Sigmoid colon (tissue), 7 donors: ENCODE measurements at regions of chr5 and their contacts with region 1.

Region 1: DNA sequence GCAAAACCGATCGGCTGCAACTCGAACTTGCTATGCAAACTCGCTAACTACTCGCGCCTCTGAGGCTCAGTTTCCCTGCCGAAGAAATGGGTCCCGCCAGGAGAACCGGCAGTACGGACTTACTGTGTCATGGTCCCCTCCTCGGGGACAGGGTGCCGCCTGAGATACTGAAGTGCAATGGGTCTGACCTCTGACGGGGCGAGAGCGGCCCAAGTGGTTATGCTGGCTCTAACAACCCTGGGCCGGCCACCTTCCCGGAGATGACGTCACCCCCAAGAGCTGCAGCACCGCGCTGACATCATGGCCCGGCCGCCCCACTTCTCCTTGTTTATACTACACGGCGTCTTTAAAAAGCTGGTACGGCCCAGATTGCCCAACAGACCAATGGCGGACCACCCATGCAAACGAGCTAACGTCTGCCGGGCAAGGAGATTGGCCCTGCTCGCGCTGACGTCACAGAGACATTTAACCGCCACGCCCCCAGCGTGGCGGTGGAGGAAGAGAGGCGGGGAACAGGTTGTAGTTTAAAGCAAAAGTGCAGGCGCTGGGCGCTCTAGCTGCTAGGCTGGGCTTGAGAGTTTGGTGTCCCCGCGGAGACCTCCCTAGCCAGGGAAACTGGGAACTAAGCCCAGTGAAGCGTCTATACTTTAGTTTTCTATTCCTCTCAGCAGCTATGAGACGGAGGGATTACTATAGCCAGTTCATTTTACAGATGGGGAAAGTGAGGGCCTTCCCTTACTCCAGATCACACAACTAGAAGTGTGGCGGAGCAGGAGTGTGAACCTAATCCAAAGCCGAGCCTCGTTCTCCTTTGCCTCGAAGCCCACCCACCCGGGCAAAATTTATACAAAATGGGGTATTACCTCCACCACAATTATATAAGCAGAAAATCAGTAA is 654 bp upstream of the RNF44 start:
- DNase-seq: peak; percentile 100
- H3K4me3 ChIP-seq: peak overlapping the region; percentile 67 to 96 (median 90)
- H3K27ac ChIP-seq: peak overlapping the region; percentile 93 to 99 (median 98)
- H3K4me1 ChIP-seq: peaks cover 0 to 64% (median 52%) of the 10 kb centered on the region in 4 donors
- H3K27me3 ChIP-seq: no peaks in the 10 kb centered on the region
- CTCF ChIP-seq: no peak
- EP300 ChIP-seq: peak in 1 of 4 donors; percentile 78
- POLR2A ChIP-seq: peak in 1 of 2 donors; percentile 34

Region 2: DNA sequence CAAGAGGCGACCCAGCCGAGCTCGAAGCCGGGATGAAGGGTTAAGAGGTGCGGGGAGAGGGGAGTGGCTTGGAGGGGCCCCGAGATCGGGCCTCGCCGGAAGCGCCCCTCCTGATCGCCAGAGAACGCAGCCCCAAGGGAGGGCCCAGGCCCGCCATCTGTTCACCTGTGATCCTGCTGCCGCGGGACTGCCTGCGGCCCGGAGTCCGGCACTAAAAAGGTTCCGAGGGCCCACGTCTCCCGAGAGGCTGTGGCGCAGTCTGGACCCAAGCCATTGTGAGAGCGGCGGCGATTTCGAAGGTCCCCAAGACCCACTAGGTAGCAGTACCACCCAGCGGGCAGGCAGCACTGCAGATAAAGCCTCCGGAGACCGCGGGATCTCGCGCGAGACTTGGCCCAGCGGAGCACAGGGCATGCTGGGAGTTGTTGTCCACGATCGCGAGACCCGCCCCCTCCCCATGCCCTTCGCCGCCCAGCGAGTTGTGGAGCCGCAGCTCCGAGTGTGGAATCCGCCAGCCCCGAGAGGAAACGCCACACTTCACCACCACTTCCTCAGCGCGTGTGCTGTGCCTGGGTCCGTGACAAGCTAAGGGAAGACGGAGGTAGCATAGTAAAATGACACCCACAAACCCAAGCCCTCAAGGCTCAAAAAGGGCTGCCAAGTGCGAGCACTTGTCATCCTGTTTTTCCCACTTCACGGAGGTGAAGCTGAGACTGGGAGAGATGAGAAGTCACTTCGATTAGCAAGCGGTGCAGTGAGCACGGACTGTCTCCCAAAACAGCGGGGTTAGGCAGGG is 176.2 kb before region 1 on chr5 and contains the start of gene KIAA1191:
- intact Hi-C with region 1: loop called (anchors 5 kb)
- DNase-seq: peak; percentile 96
- H3K4me3 ChIP-seq: peak within 1 kb of the TSS; percentile 72 to 99 (median 80)
- H3K27ac ChIP-seq: peak within 1 kb of the TSS; percentile 72 to 87 (median 84)
- H3K4me1 ChIP-seq: peaks cover 0 to 36% (median 29%) of the 10 kb centered on the region in 4 donors
- H3K27me3 ChIP-seq: no peaks in the 10 kb centered on the region
- CTCF ChIP-seq: peak in 2 of 4 experiments; percentile 3 to 9
- EP300 ChIP-seq: no peak
- POLR2A ChIP-seq: peak; percentile 55 to 85
- total RNA-seq, gene KIAA1191: 88.8 to 117 (median 108) TPM

Region 3: GRCh38 chr5:176388444-176389134 is 149.3 kb before region 1 on chr5 and contains the starts of genes HIGD2A and NOP16:
- intact Hi-C with region 1: loop called (anchors 10 kb)
- DNase-seq: peak; percentile 100
- H3K4me3 ChIP-seq: peak within 1 kb of the TSS; percentile 57 to 65 (median 61)
- H3K27ac ChIP-seq: peak within 1 kb of the TSS; percentile 88 to 94 (median 93)
- H3K4me1 ChIP-seq: peaks cover 0 to 30% (median 25%) of the 10 kb centered on the region in 4 donors
- H3K27me3 ChIP-seq: no peaks in the 10 kb centered on the region
- CTCF ChIP-seq: peak in 1 of 4 experiments; percentile 36
- EP300 ChIP-seq: no peak
- POLR2A ChIP-seq: no peak
- total RNA-seq, gene HIGD2A: 201 to 249 (median 235) TPM
- total RNA-seq, gene NOP16: 4.4 to 17.8 (median 9.6) TPM

Region 4: DNA sequence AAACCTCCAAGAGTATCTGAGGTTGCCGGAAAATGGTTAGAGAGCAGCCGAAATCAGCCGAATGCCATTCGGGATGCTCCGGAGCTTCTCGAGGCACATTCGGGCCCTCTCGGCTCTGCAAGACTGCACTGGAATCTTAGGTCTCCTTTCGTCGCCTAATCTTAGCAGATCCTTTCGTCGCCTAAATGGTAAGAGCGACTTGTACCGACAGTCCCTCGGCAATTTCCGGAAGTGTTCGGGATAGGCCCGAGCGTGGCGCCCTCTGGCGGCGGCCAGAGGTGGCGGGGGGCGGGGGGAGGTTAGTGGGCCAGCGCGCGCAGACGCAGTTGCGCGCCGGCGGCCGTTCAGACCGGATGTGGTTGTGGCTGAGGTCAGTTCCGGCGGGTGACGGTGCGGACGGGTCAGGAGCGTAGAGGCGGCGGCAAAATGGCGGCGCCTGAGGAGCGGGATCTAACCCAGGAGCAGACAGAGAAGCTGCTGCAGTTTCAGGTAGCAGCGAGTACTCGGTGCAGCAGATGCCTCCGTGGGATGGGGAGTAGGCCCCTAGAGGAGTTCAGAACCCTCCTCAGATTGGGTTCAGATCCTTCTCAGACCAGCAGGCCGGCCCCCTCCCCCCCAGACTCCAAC is 89.8 kb before region 1 on chr5 and contains the start of gene FAF2:
- intact Hi-C with region 1: loop called (anchors 2 kb)
- DNase-seq: peak; percentile 98
- H3K4me3 ChIP-seq: peak within 1 kb of the TSS; percentile 65 to 99 (median 94)
- H3K27ac ChIP-seq: peak within 1 kb of the TSS; percentile 94 to 98 (median 96)
- H3K4me1 ChIP-seq: peaks cover 0 to 27% (median 25%) of the 10 kb centered on the region in 4 donors
- H3K27me3 ChIP-seq: no peaks in the 10 kb centered on the region
- CTCF ChIP-seq: peak; percentile 88 to 98 (median 96)
- EP300 ChIP-seq: peak in 1 of 4 donors; percentile 16
- POLR2A ChIP-seq: peak; percentile 67 to 85
- total RNA-seq, gene FAF2: 18.5 to 24.6 (median 19.1) TPM

Region 5: GRCh38 chr5:177022384-177023308 is 484.8 kb after region 1 on chr5 and contains the start of gene ZNF346:
- intact Hi-C with region 1: loop called (anchors 10 kb)
- DNase-seq: peak; percentile 97
- H3K4me3 ChIP-seq: peak within 1 kb of the TSS; percentile 85 to 95 (median 92)
- H3K27ac ChIP-seq: peak within 1 kb of the TSS; percentile 89 to 93 (median 92)
- H3K4me1 ChIP-seq: peaks cover 0 to 36% (median 25%) of the 10 kb centered on the region in 4 donors
- H3K27me3 ChIP-seq: no peaks in the 10 kb centered on the region
- CTCF ChIP-seq: peak in 3 of 4 experiments; percentile 33 to 58 (median 46)
- EP300 ChIP-seq: no peak
- POLR2A ChIP-seq: peak in 1 of 2 donors; percentile 30
- total RNA-seq, gene ZNF346: 12.5 to 21.9 (median 15.0) TPM